Ascending aorta (tissue), 2 donors: ENCODE measurements at regions of chr5 and their contacts with region 1.

Region 1: DNA sequence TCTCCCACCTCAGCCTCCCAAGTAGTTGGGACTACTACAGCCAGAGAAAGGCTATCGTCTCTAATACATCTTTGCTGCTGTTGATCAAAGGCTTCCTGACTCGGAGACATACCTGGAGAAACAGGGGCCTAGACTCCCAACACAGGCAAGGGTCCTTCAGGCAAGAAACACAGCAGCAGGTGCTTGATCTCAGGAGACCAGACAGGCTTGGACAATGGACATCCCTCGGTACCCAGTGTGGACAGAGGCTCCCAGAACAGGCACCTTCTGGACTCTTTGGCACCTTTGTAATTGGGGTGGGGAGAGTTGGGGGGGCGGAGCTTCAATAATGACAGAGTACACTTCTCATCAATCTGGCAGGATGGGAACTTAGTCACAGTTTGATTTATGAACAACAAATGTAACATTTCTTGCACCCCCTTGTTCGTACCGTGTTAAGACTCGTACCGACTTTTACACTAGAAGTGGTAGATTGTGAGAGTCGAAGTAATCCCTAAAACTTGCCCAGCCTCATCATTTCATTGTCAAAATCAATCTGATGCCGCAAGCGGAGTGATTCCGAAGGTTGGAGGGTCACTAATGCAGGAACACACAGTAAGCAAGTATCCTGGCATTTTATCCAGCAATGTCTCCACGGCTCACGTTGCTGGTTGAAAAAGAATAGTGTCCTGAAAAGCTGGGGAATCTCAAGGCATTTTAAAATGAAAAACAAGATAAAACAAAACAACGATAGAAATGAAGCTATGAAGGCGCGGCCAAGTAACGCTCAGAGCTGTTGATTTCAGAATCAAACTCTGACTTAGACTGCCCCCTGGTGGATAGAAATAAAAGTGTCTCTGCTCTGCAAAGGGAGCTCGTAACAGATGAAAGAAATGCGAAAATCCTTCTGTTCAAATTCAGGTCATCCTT is 46.4 kb upstream of the STK32A start:
- DNase-seq: no peak
- H3K4me3 ChIP-seq: peak overlapping the region in 1 of 2 donors; percentile 44
- H3K27ac ChIP-seq: no peak overlapping the region
- H3K4me1 ChIP-seq: no peaks in the 10 kb centered on the region
- H3K27me3 ChIP-seq: no peaks in the 10 kb centered on the region
- CTCF ChIP-seq: peak; percentile 65 to 87 (median 80)

Region 2: GRCh38 chr5:146533260-146533857 is 655.1 kb before region 1 on chr5:
- intact Hi-C with region 1: loop called (anchors 1 kb)
- DNase-seq: peak in 1 of 2 donors; percentile 76
- H3K4me3 ChIP-seq: no peak overlapping the region
- H3K27ac ChIP-seq: no peak overlapping the region
- H3K4me1 ChIP-seq: no peaks in the 10 kb centered on the region
- H3K27me3 ChIP-seq: no peaks in the 10 kb centered on the region
- CTCF ChIP-seq: peak; percentile 56 to 87 (median 79)